Mucosa of descending colon (tissue), 3 donors: ENCODE measurements at regions of chr12 and their contacts with region 1.

Region 1: DNA sequence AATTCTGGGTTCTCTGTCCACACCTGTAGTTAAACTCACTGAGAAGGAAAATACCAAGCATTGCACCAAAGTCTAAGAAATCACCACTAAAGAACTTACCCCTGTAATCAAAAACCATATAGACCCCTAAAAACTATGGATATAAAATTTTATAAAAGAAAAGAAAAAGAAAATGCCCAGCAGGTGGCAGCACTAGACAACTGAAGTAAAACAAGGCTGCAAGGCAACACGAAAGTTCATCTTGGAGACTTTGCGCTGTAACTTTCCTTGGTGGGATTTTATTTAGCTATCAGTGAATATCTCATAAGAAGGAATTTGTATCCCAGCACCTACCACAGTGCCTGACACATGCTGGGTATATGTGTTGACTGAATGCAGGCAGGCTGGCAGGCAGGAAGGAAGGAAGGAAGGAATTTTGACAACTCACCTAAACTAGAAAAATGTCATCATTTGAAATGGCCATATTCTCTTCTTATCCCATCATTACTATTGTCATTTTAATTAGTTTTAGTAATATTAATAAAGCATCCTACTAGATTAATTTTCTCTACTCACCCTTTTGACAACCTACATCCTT is 68.2 kb upstream of the ETV6 start:
- DNase-seq: peak in 1 of 3 donors; percentile 96
- ATAC-seq: peak; percentile 46
- H3K4me3 ChIP-seq: no peak overlapping the region
- H3K4me1 ChIP-seq: peaks cover 6% of the 10 kb centered on the region
- CTCF ChIP-seq: no peak

Region 2: DNA sequence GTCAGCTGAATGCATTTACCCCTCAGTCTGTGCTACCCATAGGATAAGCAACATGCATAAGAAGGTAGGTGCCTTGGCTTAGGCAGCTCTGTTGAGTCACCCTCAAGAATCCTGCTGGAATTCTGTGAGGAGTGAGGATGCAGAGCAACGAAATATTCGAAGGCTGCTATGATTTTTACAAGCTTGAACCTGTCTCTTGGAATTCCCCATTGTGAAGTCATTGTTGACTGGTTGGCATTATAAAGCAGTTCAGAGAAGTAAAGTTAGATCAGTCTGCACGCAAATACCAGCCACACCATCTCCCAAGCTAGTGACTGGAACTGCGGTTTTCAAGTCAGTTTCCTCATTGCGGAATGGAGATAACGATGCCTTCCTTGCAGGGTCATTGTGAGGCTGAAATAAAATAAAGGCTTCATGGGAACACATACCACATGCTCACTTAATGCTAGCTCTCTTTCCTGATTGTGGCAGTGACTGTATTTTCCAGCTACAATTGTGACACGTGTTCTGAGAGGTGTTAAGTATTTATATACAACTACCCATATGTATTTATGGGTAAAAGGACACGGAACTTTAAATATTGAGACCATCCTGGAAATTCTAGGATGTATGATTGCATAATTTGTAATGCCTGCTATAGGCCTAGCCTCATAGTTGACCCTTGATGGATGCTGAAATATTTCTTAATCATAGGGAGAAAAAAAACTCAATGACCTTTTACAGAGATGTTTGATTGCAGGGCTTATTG is 164.9 kb after region 1 on chr12:
- intact Hi-C with region 1: no loop called
- DNase-seq: no peak
- ATAC-seq: peak; percentile 84
- H3K4me3 ChIP-seq: no peak overlapping the region
- H3K4me1 ChIP-seq: peaks cover 14% of the 10 kb centered on the region
- CTCF ChIP-seq: no peak

Region 3: GRCh38 chr12:12032851-12033588 is 451.8 kb after region 1 on chr12:
- intact Hi-C with region 1: loop called (anchors 2 to 5 kb)
- DNase-seq: peak; percentile 82 to 91 (median 84)
- ATAC-seq: peak; percentile 88
- H3K4me3 ChIP-seq: no peak overlapping the region
- H3K4me1 ChIP-seq: peaks cover 8% of the 10 kb centered on the region
- CTCF ChIP-seq: peak; percentile 69